Cardiac septum (tissue), 1 donor: ENCODE measurements at regions of chr20 and their contacts with region 1.

Region 1: DNA sequence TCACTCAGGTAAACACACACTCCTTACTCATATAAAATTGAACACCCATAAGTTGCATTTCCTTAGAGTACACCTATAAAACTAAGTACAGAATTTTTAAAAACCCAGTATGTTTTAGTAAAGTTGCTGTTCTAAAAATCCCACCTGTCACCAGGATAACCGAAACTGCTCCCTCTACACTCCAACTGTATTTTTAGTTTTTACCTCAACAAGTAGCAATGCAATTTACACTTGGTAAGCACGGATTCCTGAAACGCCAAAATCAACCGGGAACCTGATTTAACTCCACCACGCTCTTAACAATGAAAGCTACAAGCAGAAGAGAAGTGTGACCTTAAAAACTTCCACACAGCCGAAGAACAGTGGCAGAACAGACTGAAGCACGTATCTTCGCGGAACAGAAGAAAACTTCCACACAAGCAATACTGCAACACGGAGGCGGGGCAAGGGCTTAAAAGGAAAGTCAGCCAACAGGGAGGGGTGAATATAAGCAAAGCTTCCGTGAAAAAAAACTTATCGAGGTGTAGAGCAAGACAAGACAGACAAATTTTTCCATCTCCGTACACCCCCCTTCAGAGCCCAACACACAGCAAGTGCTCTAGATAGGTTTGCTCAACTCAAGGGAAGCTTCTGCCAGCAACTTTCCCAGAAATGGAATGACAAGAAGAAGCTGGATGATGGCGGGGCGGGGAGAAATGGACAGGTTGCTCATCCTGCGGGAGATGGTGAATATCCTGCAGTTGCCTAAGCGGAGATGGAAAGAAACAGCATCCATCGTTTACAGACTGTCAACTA is 1.4 kb downstream of the STAU1 start:
- DNase-seq: peak; percentile 84

Region 2: GRCh38 chr20:49132995-49133478 is 53.7 kb before region 1 on chr20:
- intact Hi-C with region 1: loop called (anchors 10 kb)
- DNase-seq: no peak

Region 3: DNA sequence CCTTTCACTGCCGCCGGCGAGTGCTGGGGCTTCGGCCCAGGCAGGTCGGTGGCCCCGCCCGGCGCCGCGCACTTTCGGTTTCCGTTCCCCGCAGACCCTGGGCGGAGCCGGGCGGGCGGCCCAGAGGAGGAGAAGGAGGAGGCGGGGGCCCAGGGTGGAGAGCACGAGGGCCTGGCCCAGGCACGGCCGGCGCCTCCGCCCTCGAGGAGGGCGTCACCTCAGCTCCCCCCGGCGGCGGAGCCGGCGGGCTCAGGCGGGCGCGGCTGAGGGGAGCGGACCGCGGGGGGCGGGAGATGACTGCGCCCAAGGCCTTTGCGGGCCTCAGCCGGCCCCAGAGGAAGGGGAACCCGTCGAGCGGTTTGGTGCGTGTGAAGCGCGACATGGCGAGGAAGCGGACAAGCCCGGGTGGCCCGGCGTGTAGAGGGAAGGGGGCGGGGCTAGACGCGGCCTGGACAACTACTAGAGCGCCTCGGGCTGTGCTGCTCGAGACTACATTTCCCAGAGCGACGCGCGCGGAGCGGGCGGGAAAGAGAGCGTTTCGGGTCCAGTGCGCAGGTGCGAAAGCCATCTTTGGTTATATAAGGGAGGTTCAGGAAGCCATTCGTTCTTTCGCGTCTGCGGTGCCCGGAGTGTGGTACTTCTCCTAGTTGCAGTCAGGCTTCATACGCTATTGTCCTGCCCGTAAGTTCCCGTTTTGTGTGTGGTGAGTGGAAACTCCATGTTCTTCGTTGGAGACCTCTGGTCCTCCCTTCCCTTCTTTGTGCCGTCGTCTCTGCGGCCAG is 91.5 kb after region 1 on chr20 and contains the start of gene ZNFX1:
- intact Hi-C with region 1: loop called (anchors 1 kb)
- DNase-seq: peak; percentile 99
- total RNA-seq, gene ZNFX1: 24.0 TPM

Region 4: DNA sequence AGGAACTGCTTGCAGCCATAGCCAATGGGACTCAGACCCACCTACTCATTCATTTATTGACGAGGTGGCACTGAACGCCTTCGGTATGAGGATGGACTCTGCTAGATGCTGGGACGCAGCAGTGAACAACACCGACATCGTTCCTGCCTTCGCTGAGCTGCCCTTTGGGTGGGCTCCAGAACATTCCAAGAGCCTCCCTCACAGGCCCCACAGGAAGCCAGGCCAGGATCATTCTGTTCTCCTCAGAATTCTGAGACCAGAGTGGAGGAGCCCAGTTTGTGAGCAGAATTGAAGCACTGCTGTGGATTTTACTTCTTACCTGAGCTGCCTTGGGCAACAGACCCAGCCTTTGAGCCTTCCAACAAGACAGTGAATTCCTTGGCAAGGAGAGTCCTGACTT is 213.7 kb after region 1 on chr20:
- intact Hi-C with region 1: no loop called
- DNase-seq: no peak